ENCODE measurements at regions of chr6 and their contacts with region 1.

Region 1: GRCh38 chr6:139369568-139370282 is 4.7 kb downstream of the CITED2 start:
- DNase-seq: no peak
- H3K4me3 ChIP-seq: peak overlapping the region; percentile 62 to 97
- H3K27ac ChIP-seq: peak overlapping the region; percentile 51
- H3K4me1 ChIP-seq: peaks cover 32% of the 10 kb centered on the region
- H3K27me3 ChIP-seq: no peaks in the 10 kb centered on the region
- CTCF ChIP-seq: peak; percentile 28 to 81 (median 66)
- POLR2A ChIP-seq: no peak

Region 2: DNA sequence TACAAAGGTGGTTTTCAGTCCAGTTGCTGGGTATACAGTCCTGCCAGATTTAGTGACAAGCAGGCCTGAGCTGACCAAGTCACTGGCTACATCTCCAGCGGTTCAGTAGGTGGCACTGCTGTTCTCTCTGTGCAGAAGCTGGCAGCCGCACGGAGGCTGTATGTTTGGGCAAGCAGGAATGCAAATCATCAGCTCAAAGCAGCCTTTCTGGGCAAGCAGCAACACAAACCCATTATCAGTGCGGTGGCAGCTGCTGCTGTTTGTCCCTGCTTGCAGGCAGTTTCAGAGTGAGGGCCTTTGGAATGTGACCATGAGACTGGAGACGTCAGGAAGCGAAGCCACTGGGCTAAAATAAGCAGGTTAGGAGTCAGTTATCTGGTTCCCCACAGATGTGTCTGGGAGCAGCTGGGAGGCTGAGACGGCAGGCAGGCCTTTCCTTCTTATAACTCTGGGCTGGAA is 150.4 kb before region 1 on chr6:
- intact Hi-C with region 1: loop called (anchors 5 kb)
- DNase-seq: peak in 1 of 2 donors; percentile 90
- H3K4me3 ChIP-seq: no peak overlapping the region
- H3K27ac ChIP-seq: no peak overlapping the region
- H3K4me1 ChIP-seq: no peaks in the 10 kb centered on the region
- H3K27me3 ChIP-seq: no peaks in the 10 kb centered on the region
- CTCF ChIP-seq: peak in 2 of 3 experiments; percentile 50 to 73
- POLR2A ChIP-seq: no peak

Measured in vagina (tissue), 2 donors.